ENCODE measurements at regions of chr17 and their contacts with region 1.

Region 1: DNA sequence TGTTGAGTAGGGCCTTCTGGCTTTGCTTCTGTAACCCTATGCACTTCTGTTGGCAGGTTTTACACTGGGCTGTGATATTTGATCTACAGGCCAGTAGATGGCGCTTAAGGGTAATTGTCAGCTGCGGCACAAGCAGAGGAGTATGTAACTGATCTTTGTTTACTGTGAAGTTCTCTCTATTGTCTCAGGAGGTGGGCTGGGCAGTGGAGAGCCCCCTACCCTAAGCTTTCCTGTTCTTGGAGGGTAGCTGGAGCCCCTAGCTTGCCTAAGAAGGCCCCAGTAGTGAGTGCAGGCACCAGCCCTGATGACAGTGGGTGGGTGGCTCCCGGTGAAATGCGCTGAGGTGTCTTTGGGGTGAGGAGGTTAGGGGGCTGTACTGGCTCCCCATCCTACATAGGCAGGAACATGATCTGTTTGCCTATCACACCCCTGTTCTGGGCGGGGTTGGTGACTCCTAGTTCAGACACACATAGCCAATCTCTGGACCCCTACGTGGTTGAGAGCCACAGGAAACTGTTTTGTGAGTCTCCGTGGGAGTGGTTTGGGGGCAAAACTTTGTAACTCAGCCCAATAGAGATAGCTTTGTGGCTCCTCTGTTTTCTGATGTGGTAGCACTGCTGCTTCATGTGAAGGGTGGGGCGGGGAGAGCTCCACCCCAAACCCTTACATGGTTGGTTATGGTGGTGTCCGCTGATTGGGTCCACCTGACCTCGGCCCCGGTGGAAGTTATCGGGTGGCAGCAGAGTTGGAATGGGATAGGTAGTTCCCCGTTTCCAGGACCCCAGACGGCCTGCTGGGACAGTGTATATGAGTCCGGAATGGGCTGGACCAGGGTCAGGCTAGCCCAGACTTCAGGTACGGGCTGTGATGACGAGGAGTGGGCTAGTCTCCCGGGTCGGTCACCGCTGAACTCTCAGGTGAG is 60.4 kb downstream of the SLFN11 start:
- DNase-seq: peak; percentile 94
- ATAC-seq: peak; percentile 93
- H3K4me3 Mint-ChIP-seq: peak overlapping the region; percentile 86
- H3K27ac Mint-ChIP-seq: peak overlapping the region; percentile 94
- H3K4me1 Mint-ChIP-seq: peaks cover 42% of the 10 kb centered on the region
- H3K27me3 Mint-ChIP-seq: no peaks in the 10 kb centered on the region
- CTCF ChIP-seq: peak; percentile 86

Region 2: DNA sequence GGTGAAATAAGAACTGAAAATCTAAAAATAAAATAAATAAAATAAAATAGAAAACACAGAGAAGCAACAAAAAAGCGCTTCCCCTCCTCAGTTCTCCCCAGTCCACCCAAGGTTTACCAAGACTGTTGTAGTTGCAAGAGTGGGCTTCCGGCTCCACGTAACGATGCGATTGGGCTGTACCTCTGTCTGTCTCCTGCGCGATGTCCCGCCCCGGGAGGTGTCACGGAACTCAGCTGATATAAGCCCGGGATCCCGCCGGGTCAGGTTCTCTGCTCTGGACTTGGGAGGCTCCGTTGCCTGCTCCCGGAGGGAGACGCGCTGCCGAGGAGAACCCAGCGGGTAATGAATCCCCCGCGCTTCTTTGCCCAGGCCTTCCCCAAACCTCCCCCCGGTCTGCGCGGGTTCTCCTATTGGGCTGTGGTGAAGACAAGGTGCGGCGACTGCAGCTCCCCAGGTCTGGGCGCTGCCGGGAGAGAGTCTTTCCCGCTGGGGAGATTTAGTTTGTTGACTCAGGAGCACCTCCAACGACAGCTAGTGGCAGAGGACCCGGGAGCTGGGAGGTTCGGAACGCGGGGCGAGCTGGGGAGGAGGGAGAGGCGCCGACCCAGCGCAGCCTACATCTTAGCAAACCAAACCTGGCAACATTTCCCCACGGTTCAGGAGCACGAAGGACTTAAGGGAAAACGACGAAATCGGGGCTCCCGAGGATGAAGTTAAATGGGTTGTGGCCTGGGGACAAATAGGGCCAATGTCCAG is 70.1 kb before region 1 on chr17 and contains the start of gene SLFN5:
- CTCF ChIA-PET with region 1: interaction called, 14 read pairs
- POLR2A ChIA-PET with region 1: interaction called, 3 read pairs
- intact Hi-C with region 1: no loop called
- DNase-seq: peak; percentile 95
- ATAC-seq: peak; percentile 72
- H3K4me3 Mint-ChIP-seq: peak within 1 kb of the TSS; percentile 93
- H3K27ac Mint-ChIP-seq: peak within 1 kb of the TSS; percentile 97
- H3K4me1 Mint-ChIP-seq: peaks cover 64% of the 10 kb centered on the region
- H3K27me3 Mint-ChIP-seq: no peaks in the 10 kb centered on the region
- CTCF ChIP-seq: no peak
- total RNA-seq, gene SLFN5: 29.1 to 32.7 TPM

Region 3: GRCh38 chr17:35286120-35286781 is 26.8 kb before region 1 on chr17:
- CTCF ChIA-PET with region 1: interaction called, 13 read pairs
- POLR2A ChIA-PET with region 1: interaction called, 6 read pairs
- intact Hi-C with region 1: no loop called
- DNase-seq: peak; percentile 46
- ATAC-seq: peak; percentile 93
- H3K4me3 Mint-ChIP-seq: peak overlapping the region; percentile 16
- H3K27ac Mint-ChIP-seq: peak overlapping the region; percentile 61
- H3K4me1 Mint-ChIP-seq: peaks cover 39% of the 10 kb centered on the region
- H3K27me3 Mint-ChIP-seq: no peaks in the 10 kb centered on the region
- CTCF ChIP-seq: no peak

Region 4: DNA sequence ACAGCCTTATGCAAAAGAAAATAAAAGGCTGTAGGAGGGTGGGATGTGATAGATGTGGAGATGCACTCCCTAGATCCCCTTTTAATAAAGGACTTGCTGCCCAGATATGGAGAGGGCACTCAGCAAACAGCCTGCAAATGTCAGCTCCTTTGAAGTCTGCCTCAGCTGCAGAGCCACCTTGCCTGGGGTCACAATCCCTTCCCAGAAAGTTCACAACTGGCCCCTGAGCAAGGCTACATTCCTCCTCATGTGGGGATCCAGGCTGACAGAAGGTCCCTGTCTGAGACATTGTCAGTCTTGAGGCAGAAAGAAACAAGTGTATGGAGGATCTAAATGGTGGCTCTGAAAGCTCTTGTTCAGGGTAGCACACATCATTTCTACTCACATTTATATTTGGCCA is 24.3 kb after region 1 on chr17:
- CTCF ChIA-PET with region 1: interaction called, 11 read pairs
- POLR2A ChIA-PET with region 1: interaction called, 3 read pairs
- intact Hi-C with region 1: no loop called
- DNase-seq: no peak
- ATAC-seq: no peak
- H3K4me3 Mint-ChIP-seq: no peak overlapping the region
- H3K27ac Mint-ChIP-seq: no peak overlapping the region
- H3K4me1 Mint-ChIP-seq: peaks cover 16% of the 10 kb centered on the region
- H3K27me3 Mint-ChIP-seq: no peaks in the 10 kb centered on the region
- CTCF ChIP-seq: no peak

Region 5: DNA sequence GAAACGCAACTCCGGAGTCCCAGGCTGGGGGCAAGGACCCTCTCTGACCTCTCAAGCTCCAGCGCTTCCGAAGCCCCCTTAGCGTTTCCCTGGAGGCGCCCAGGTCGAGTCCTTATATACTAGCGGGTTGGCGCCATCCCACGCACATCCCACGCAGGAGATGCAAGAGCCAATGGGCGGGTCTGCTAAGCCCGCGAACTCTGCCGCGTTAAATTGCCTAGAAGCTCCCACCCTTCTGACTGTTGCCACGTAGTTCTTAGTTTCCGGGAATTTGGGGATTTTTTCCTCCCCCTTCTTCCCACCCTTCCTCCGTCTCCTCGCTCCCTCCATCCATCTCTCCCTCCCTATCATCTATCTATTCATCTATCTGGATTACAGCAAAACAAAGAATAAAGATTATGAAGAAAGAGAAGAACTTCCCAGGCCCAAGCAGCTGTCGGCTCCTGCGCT is 60.5 kb after region 1 on chr17 and contains the start of gene SLFN11:
- CTCF ChIA-PET with region 1: interaction called, 5 read pairs
- POLR2A ChIA-PET with region 1: interaction called, 22 read pairs
- intact Hi-C with region 1: no loop called
- DNase-seq: peak; percentile 95
- ATAC-seq: peak; percentile 71
- H3K4me3 Mint-ChIP-seq: peak within 1 kb of the TSS; percentile 91
- H3K27ac Mint-ChIP-seq: peak within 1 kb of the TSS; percentile 99
- H3K4me1 Mint-ChIP-seq: peaks cover 52% of the 10 kb centered on the region
- H3K27me3 Mint-ChIP-seq: no peaks in the 10 kb centered on the region
- CTCF ChIP-seq: no peak
- total RNA-seq, gene SLFN11: 95.8 to 106 TPM

Region 6: GRCh38 chr17:35529866-35530265 is 216.8 kb after region 1 on chr17:
- CTCF ChIA-PET with region 1: interaction called, 45 read pairs
- POLR2A ChIA-PET with region 1: interaction called, 13 read pairs
- intact Hi-C with region 1: no loop called
- DNase-seq: peak; percentile 17
- ATAC-seq: peak; percentile 42
- H3K4me3 Mint-ChIP-seq: peak overlapping the region; percentile 67
- H3K27ac Mint-ChIP-seq: peak overlapping the region; percentile 83
- H3K4me1 Mint-ChIP-seq: peaks cover 69% of the 10 kb centered on the region
- H3K27me3 Mint-ChIP-seq: no peaks in the 10 kb centered on the region
- CTCF ChIP-seq: no peak

Region 7: GRCh38 chr17:35747540-35748017 is 434.5 kb after region 1 on chr17:
- CTCF ChIA-PET with region 1: interaction called, 14 read pairs
- POLR2A ChIA-PET with region 1: no interaction called
- intact Hi-C with region 1: no loop called
- DNase-seq: peak; percentile 93
- ATAC-seq: peak; percentile 88
- H3K4me3 Mint-ChIP-seq: peak overlapping the region; percentile 24
- H3K27ac Mint-ChIP-seq: no peak overlapping the region
- H3K4me1 Mint-ChIP-seq: peaks cover 33% of the 10 kb centered on the region
- H3K27me3 Mint-ChIP-seq: peaks cover 43% of the 10 kb centered on the region
- CTCF ChIP-seq: peak; percentile 88